Pancreas (tissue), 10 donors: ENCODE measurements at regions of chr11 and their contacts with region 1.

Region 1: DNA sequence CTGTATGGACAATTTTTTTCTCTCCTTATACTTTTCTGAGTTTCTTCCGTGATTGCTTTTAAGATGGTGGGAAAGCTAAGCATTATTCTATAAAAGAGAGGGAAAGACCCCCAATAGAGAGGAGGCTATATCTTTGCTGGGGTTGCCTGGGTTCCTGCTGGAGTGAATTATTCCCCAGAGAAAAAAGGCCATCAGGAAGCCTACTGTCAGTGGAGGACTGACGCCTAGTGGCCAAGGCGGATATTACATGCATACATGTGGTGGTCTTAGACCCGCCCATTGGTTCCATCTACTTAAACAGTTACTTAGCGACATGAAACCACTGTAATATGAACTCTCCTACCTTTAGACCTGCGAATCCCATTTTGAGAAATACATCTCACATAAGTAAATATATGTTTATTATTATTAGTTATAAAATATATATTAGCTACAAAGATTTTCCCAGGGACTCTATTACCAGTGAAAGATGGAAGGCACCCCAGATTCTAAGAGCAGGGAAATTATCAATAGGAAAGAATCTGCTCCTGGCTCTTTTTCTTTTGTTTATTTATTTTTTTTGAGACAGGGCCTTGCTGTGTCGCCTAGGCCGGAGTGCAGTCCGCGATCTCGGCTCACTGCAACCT is 15.7 kb upstream of the PGA3 start:
- DNase-seq: peak in 5 of 6 donors; percentile 47 to 85 (median 63)
- ATAC-seq: peak; percentile 50 to 96 (median 92)
- H3K4me3 ChIP-seq: no peak overlapping the region
- H3K27ac ChIP-seq: no peak overlapping the region
- H3K4me1 ChIP-seq: no peaks in the 10 kb centered on the region
- H3K27me3 ChIP-seq: peaks cover 0 to 4% (median 0%) of the 10 kb centered on the region in 4 donors
- CTCF ChIP-seq: peak; percentile 79 to 91 (median 85)

Region 2: DNA sequence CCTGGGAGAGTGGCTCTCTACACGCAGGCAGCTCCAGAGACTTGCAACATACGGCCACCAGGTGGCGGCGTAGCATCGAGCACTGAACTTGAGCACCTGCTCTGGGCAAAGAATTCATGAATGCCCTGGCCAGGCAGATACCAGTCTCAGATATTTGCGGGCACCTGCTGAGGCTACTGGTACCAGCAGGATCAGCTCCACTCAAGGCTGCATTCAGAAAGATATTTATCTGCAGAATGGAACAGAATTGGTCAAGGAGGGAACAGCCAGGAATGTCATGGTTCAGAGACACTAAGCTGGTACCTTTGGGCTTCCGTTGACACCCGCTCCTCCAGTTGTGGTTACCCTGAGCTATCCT is 356.5 kb before region 1 on chr11:
- intact Hi-C with region 1: loop called in 2 of 3 experiments (anchors 10 kb)
- DNase-seq: peak; percentile 67 to 92 (median 82)
- ATAC-seq: peak; percentile 91 to 99 (median 98)
- H3K4me3 ChIP-seq: no peak overlapping the region
- H3K27ac ChIP-seq: no peak overlapping the region
- H3K4me1 ChIP-seq: no peaks in the 10 kb centered on the region
- H3K27me3 ChIP-seq: no peaks in the 10 kb centered on the region
- CTCF ChIP-seq: peak; percentile 82 to 88 (median 84)

Region 3: DNA sequence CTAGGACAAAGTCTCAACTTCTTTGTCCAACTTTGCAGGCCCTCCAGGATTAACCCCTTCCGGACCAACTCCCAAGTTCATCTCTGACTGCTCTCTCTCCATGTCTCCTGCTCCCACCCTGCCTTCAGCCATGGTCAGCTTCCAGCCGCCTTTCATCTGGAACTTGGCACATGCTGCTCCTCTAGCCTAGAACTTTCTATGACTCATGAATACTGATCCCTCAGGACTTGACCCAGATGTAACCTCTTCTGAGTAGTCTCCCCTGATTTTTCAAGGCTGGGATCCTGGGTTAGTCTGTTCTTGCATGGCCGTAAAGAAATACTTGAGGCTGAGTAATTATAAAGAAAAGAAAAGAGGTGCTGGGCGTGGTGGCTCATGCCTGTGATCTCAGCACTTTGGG is 230.4 kb before region 1 on chr11:
- intact Hi-C with region 1: no loop called
- DNase-seq: no peak
- ATAC-seq: no peak
- H3K4me3 ChIP-seq: no peak overlapping the region
- H3K27ac ChIP-seq: no peak overlapping the region
- H3K4me1 ChIP-seq: no peaks in the 10 kb centered on the region
- H3K27me3 ChIP-seq: no peaks in the 10 kb centered on the region
- CTCF ChIP-seq: no peak